Posterior cingulate gyrus (tissue), 11 donors: ENCODE measurements at regions of chr9 and their contacts with region 1.

Region 1: GRCh38 chr9:98207606-98208005 is 15.2 kb upstream of the CORO2A start:
- DNase-seq: peak in 1 of 10 donors; percentile 26

Region 2: GRCh38 chr9:97890038-97890437 is 317.6 kb before region 1 on chr9:
- intact Hi-C with region 1: no loop called
- DNase-seq: peak in 1 of 10 donors; percentile 24

Region 3: GRCh38 chr9:98074115-98074990 is 133.3 kb before region 1 on chr9:
- intact Hi-C with region 1: loop called (anchors 10 kb)
- DNase-seq: peak; percentile 38 to 95 (median 78)

Region 4: GRCh38 chr9:98192503-98193335 is 14.9 kb before region 1 on chr9 and contains the start of gene CORO2A:
- intact Hi-C with region 1: no loop called
- DNase-seq: peak in 9 of 10 donors; percentile 51 to 95 (median 72)

Region 5: DNA sequence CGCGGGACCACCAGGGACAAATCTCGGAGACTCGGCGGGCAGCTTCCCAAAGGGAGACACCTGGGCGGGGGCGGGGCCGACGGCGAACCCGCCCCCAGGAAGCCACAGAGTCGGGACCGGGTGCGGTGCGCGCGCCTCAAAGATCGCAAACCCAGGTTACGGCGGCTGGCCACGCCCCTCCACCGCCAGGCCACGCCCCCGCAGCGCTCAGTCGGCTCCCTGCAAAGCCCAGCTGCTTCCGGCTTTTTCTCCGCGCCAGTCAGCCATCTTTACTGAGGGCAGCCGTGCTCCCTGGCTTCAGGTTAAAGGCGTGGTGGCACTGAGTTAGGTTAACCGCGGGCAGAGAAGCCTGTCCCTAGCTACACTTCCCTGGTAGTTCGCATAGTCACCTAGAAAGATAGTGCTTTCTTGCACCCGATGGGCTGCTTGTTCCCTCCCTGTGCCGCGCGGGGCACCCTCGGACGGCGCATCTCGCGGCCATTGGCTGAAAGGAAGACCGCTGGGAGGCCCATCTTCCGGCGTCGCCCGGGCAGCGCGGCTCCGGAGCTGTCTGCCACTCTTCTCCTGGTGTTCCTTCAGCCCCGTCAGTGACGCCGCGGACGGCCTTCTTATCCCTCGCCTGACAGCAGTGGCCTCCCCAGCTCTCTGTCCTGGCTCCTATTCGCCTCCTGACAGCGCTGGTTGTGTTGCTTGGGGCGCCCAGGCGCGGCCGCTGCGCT is 48.1 kb after region 1 on chr9 and contains the start of gene TBC1D2:
- intact Hi-C with region 1: no loop called
- DNase-seq: peak; percentile 89 to 99 (median 93)